Activated naive CD4-positive, alpha-beta T cell treated with anti-CD3 and anti-CD28 coated beads, Interleukin-2, amount 10 ng/mL, durations not matched to agents 7 days and 5 days (primary cell): ENCODE measurements at regions of chr10 and their contacts with region 1.

Region 1: DNA sequence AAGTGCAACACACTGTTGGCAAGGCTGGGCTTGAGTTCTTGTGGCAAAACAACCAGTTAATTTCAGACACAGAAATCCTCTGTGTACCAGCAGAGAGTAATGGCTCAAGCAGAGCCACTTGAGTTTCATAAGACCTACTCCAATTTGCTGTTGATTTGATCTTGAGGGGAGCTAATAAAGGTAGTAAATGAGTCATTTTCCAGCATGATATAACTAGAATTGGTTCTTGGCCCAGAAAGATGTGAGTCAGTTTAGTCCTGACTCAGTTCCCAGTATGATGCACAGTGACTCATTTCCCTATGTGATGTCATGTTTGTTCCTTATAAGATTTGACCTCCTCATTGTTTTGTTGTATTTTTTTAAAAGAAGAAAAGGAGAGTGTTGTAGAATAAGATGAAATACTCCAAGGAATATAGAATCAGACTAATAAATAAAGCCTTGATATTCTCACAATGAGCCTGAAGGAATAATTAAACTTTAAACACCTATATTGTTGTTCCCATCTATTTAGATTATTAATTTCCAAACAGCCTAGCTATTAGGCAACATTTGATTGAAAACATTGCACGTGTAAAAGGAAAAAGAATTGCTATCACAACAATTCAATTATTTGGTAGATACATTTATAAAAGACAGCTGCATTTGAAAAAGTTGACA is 186.2 kb downstream of the REEP3 start:
- DNase-seq: no peak
- H3K4me3 Mint-ChIP-seq: no peak overlapping the region
- H3K27ac Mint-ChIP-seq: no peak overlapping the region
- H3K4me1 Mint-ChIP-seq: peaks cover 8% of the 10 kb centered on the region
- H3K27me3 Mint-ChIP-seq: no peaks in the 10 kb centered on the region

Region 2: GRCh38 chr10:63166742-63167258 is 540.6 kb before region 1 on chr10:
- CTCF ChIA-PET with region 1: interaction called, 13 read pairs
- DNase-seq: no peak
- H3K4me3 Mint-ChIP-seq: no peak overlapping the region
- H3K27ac Mint-ChIP-seq: no peak overlapping the region
- H3K4me1 Mint-ChIP-seq: peaks cover 25% of the 10 kb centered on the region
- H3K27me3 Mint-ChIP-seq: no peaks in the 10 kb centered on the region

Region 3: GRCh38 chr10:63409465-63410027 is 297.8 kb before region 1 on chr10:
- CTCF ChIA-PET with region 1: no interaction called
- DNase-seq: no peak
- H3K4me3 Mint-ChIP-seq: no peak overlapping the region
- H3K27ac Mint-ChIP-seq: no peak overlapping the region
- H3K4me1 Mint-ChIP-seq: peaks cover 3% of the 10 kb centered on the region
- H3K27me3 Mint-ChIP-seq: no peaks in the 10 kb centered on the region

Region 4: DNA sequence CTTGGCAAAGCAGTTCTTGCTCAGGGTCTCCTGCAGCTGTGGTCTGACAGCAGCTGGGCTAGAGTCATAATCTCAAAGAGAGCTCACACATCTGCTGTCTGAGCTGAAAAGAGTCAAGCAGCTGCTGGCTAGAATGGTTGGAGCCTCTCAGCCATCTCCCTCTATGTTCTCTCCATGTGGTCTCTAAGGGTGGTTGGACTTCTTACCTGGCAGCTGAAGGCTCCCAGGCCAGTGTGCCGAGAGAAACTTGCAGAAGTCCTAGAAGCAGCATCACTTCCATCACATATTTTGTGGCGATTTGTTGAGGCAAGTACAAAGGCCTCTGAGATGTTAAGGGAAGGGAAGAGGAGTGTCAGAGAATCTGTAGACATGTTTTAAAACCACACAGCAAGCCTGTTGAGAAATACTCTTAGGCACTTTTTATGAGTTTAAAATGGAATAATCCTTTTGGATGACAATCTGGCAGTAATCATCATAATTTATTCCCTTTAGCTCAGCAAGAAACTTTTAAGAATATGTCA is 93.0 kb before region 1 on chr10:
- CTCF ChIA-PET with region 1: no interaction called
- DNase-seq: no peak
- H3K4me3 Mint-ChIP-seq: no peak overlapping the region
- H3K27ac Mint-ChIP-seq: peak overlapping the region; percentile 74
- H3K4me1 Mint-ChIP-seq: peaks cover 7% of the 10 kb centered on the region
- H3K27me3 Mint-ChIP-seq: no peaks in the 10 kb centered on the region

Region 5: GRCh38 chr10:63692220-63692896 is 15.0 kb before region 1 on chr10:
- CTCF ChIA-PET with region 1: no interaction called
- DNase-seq: no peak
- H3K4me3 Mint-ChIP-seq: no peak overlapping the region
- H3K27ac Mint-ChIP-seq: no peak overlapping the region
- H3K4me1 Mint-ChIP-seq: no peaks in the 10 kb centered on the region
- H3K27me3 Mint-ChIP-seq: peaks cover 5% of the 10 kb centered on the region